ENCODE measurements at regions of chr3 and their contacts with region 1.

Region 1: GRCh38 chr3:128804017-128804810 is 75.2 kb upstream of the ACAD9 start:
- DNase-seq: no peak
- ATAC-seq: peak; percentile 67 to 81 (median 76)
- H3K4me3 ChIP-seq: peak overlapping the region in 1 of 3 donors; percentile 1
- H3K27ac ChIP-seq: peak overlapping the region; percentile 1 to 43 (median 1)
- H3K4me1 ChIP-seq: peaks cover 0 to 18% (median 0%) of the 10 kb centered on the region in 4 donors
- H3K27me3 ChIP-seq: no peaks in the 10 kb centered on the region
- CTCF ChIP-seq: no peak
- POLR2A ChIP-seq: no peak

Region 2: DNA sequence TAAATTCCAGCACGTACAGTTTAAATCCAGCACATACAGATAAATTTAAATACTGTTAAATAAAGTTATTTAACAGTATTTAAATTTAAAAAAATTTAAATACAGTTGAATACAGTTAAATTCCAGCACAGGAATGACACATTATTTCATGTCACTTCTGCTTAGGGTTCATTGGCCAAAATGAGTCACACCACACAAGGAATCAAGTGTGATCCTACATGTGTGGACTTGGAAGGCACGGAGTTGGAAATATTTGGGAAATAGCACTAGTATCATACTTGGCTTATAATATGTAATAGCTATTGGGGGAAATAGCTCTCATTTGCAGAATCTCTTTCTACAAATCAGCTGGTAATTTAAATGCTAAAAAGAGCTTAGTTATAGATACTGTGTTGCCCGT is 67.6 kb before region 1 on chr3:
- intact Hi-C with region 1: loop called in 1 of 2 experiments (anchors 10 kb)
- DNase-seq: no peak
- ATAC-seq: peak in 1 of 4 donors; percentile 53
- H3K4me3 ChIP-seq: no peak overlapping the region
- H3K27ac ChIP-seq: no peak overlapping the region
- H3K4me1 ChIP-seq: peaks cover 0 to 47% (median 0%) of the 10 kb centered on the region in 4 donors
- H3K27me3 ChIP-seq: no peaks in the 10 kb centered on the region
- CTCF ChIP-seq: no peak
- POLR2A ChIP-seq: no peak

Region 3: GRCh38 chr3:128942161-128942876 is 138.1 kb after region 1 on chr3:
- intact Hi-C with region 1: no loop called
- DNase-seq: no peak
- ATAC-seq: peak in 1 of 4 donors; percentile 40
- H3K4me3 ChIP-seq: no peak overlapping the region
- H3K27ac ChIP-seq: no peak overlapping the region
- H3K4me1 ChIP-seq: no peaks in the 10 kb centered on the region
- H3K27me3 ChIP-seq: no peaks in the 10 kb centered on the region
- CTCF ChIP-seq: no peak
- POLR2A ChIP-seq: no peak